ENCODE measurements at regions of chr5 and their contacts with region 1.

Region 1: GRCh38 chr5:131634996-131635754 is at the start of gene RAPGEF6:
- DNase-seq: peak; percentile 96
- H3K4me3 ChIP-seq: peak within 1 kb of the TSS; percentile 63 to 95 (median 84)
- H3K27ac ChIP-seq: peak within 1 kb of the TSS; percentile 95 to 99 (median 98)
- H3K4me1 ChIP-seq: peaks cover 15 to 54% (median 25%) of the 10 kb centered on the region in 3 donors
- H3K27me3 ChIP-seq: no peaks in the 10 kb centered on the region
- CTCF ChIP-seq: peak in 4 of 6 experiments; percentile 4 to 36 (median 14)
- POLR2A ChIP-seq: peak in 3 of 4 donors; percentile 71 to 88 (median 74)
- total RNA-seq, gene RAPGEF6: 10.2 to 26.5 (median 13.7) TPM

Region 2: GRCh38 chr5:131720714-131721113 is 85.5 kb after region 1 on chr5:
- intact Hi-C with region 1: no loop called
- DNase-seq: no peak
- H3K4me3 ChIP-seq: no peak overlapping the region
- H3K27ac ChIP-seq: no peak overlapping the region
- H3K4me1 ChIP-seq: no peaks in the 10 kb centered on the region
- H3K27me3 ChIP-seq: no peaks in the 10 kb centered on the region
- CTCF ChIP-seq: no peak
- POLR2A ChIP-seq: no peak

Region 3: DNA sequence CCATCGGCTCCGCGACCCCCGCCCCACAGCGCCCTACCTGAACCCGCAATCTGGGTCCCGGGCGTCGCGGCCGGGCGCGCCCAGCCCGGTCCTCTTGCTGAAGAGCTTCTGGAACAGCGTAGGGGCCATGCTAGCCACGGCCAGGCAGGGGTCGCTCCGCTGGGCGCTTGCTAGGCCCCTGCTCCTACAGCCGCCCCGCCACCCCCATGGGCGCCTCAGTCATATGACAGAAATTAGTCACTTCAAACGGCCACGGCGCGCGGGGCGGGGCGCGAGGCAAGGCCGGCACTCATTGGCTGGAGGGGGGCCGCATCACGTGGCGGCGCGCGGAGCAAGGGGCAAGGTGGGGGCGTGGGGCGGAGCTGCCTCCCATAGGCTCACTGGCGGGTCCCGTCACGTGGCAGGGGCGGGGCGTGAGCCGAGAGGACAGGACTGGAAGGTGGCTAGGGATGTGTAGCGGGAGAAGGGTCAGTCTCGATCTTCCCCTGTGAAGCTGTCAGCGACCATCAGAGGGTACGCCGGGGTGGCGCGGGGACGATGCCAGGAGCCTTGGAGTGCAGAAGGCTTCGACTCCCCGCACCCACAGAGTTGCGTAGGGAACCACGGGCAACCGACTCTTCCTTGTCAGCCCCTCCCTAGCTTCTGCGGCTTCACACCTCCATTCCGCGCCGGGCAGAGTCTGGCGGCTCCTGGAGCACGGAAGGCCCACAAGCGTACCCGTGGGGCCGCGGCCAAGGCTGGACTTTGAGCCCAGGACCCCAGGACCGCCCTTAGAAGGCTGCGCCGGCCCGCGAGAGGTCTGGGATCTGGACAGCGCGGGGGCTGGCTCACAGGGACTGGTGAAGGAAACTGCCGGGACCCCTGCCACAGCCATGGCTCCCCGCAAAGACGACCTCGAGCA is 161.9 kb after region 1 on chr5 and contains the start of gene FNIP1:
- intact Hi-C with region 1: loop called (anchors 10 kb)
- DNase-seq: peak; percentile 98
- H3K4me3 ChIP-seq: peak within 1 kb of the TSS; percentile 90 to 99 (median 97)
- H3K27ac ChIP-seq: peak within 1 kb of the TSS; percentile 98 to 99 (median 98)
- H3K4me1 ChIP-seq: peaks cover 4 to 44% (median 22%) of the 10 kb centered on the region in 3 donors
- H3K27me3 ChIP-seq: no peaks in the 10 kb centered on the region
- CTCF ChIP-seq: no peak
- POLR2A ChIP-seq: peak in 3 of 4 donors; percentile 90 to 98 (median 94)
- total RNA-seq, gene FNIP1: 7.6 to 41.6 (median 20.7) TPM